IMR-90 (cell line): ENCODE measurements at regions of chr9 and their contacts with region 1.

Region 1: GRCh38 chr9:33466565-33467495 is 6.9 kb downstream of the NOL6 start:
- DNase-seq: peak; percentile 24
- ATAC-seq: peak; percentile 91
- H3K4me3 ChIP-seq: no peak overlapping the region
- H3K27ac ChIP-seq: no peak overlapping the region
- H3K4me1 ChIP-seq: no peaks in the 10 kb centered on the region
- H3K27me3 ChIP-seq: no peaks in the 10 kb centered on the region
- CTCF ChIP-seq: peak; percentile 84
- POLR2A ChIP-seq: no peak
- RAD21 ChIP-seq: peak; percentile 84

Region 2: DNA sequence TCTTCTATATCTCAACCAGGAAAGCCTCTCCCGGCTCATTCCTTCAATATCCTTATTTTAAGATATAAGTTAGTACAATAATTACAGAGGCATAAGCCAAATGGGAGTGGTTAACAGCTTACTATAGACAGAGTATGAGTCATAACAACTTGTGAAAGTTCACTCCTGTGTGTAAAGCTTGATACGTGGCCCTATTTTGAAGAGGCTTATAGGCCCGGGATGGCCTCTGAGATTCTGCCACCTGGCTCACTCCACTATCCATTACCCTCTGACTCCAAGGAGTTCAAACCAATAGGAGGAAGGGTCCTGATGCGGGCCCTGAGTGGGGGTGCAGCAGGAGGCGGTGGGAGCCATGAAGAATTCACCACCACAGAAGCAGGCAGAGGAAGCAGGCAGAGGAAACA is 336.3 kb before region 1 on chr9:
- CTCF ChIA-PET with region 1: no interaction called
- POLR2A ChIA-PET with region 1: no interaction called
- dilution Hi-C with region 1: no loop called
- in situ Hi-C with region 1: no loop called
- intact Hi-C with region 1: no loop called
- DNase-seq: peak; percentile 46
- ATAC-seq: no peak
- H3K4me3 ChIP-seq: no peak overlapping the region
- H3K27ac ChIP-seq: no peak overlapping the region
- H3K4me1 ChIP-seq: peaks cover 15% of the 10 kb centered on the region
- H3K27me3 ChIP-seq: no peaks in the 10 kb centered on the region
- CTCF ChIP-seq: no peak
- POLR2A ChIP-seq: no peak
- RAD21 ChIP-seq: no peak

Region 3: GRCh38 chr9:33506626-33507370 is 40.0 kb after region 1 on chr9:
- CTCF ChIA-PET with region 1: no interaction called
- POLR2A ChIA-PET with region 1: no interaction called
- dilution Hi-C with region 1: no loop called
- in situ Hi-C with region 1: no loop called
- intact Hi-C with region 1: no loop called
- DNase-seq: peak; percentile 97
- ATAC-seq: peak; percentile 84
- H3K4me3 ChIP-seq: peak overlapping the region; percentile 44; the same call in 1 of the 2 replicates
- H3K27ac ChIP-seq: peak overlapping the region; percentile 97
- H3K4me1 ChIP-seq: peaks cover 9% of the 10 kb centered on the region
- H3K27me3 ChIP-seq: no peaks in the 10 kb centered on the region
- CTCF ChIP-seq: no peak
- POLR2A ChIP-seq: no peak; the same call in 1 of the 2 replicates
- RAD21 ChIP-seq: no peak

Region 4: GRCh38 chr9:33837138-33837537 is 370.3 kb after region 1 on chr9:
- CTCF ChIA-PET with region 1: no interaction called
- POLR2A ChIA-PET with region 1: interaction called, 14 read pairs
- dilution Hi-C with region 1: no loop called
- in situ Hi-C with region 1: no loop called
- intact Hi-C with region 1: no loop called
- DNase-seq: no peak
- ATAC-seq: no peak
- H3K4me3 ChIP-seq: no peak overlapping the region
- H3K27ac ChIP-seq: peak overlapping the region; percentile 13; the same call in 1 of the 2 replicates
- H3K4me1 ChIP-seq: peaks cover 13% of the 10 kb centered on the region
- H3K27me3 ChIP-seq: no peaks in the 10 kb centered on the region
- CTCF ChIP-seq: no peak
- POLR2A ChIP-seq: no peak
- RAD21 ChIP-seq: no peak